PC-3 (cell line): ENCODE measurements at regions of chr2 and their contacts with region 1.

Region 1: GRCh38 chr2:62705007-62705829 is at the start of gene EHBP1:
- DNase-seq: peak; percentile 99
- ATAC-seq: peak; percentile 91
- H3K4me3 ChIP-seq: peak within 1 kb of the TSS; percentile 76
- H3K27ac ChIP-seq: peak within 1 kb of the TSS; percentile 35
- H3K4me1 ChIP-seq: peaks cover 42% of the 10 kb centered on the region
- H3K27me3 ChIP-seq: no peaks in the 10 kb centered on the region
- CTCF ChIP-seq: no peak
- total RNA-seq, gene EHBP1: 25.7 and 35.1 TPM in 2 replicates

Region 2: GRCh38 chr2:62334440-62335058 is 370.7 kb before region 1 on chr2:
- CTCF ChIA-PET with region 1: no interaction called
- POLR2A ChIA-PET with region 1: no interaction called
- intact Hi-C with region 1: no loop called
- DNase-seq: no peak
- ATAC-seq: no peak
- H3K4me3 ChIP-seq: no peak overlapping the region
- H3K27ac ChIP-seq: no peak overlapping the region
- H3K4me1 ChIP-seq: no peaks in the 10 kb centered on the region
- H3K27me3 ChIP-seq: no peaks in the 10 kb centered on the region
- CTCF ChIP-seq: no peak

Region 3: DNA sequence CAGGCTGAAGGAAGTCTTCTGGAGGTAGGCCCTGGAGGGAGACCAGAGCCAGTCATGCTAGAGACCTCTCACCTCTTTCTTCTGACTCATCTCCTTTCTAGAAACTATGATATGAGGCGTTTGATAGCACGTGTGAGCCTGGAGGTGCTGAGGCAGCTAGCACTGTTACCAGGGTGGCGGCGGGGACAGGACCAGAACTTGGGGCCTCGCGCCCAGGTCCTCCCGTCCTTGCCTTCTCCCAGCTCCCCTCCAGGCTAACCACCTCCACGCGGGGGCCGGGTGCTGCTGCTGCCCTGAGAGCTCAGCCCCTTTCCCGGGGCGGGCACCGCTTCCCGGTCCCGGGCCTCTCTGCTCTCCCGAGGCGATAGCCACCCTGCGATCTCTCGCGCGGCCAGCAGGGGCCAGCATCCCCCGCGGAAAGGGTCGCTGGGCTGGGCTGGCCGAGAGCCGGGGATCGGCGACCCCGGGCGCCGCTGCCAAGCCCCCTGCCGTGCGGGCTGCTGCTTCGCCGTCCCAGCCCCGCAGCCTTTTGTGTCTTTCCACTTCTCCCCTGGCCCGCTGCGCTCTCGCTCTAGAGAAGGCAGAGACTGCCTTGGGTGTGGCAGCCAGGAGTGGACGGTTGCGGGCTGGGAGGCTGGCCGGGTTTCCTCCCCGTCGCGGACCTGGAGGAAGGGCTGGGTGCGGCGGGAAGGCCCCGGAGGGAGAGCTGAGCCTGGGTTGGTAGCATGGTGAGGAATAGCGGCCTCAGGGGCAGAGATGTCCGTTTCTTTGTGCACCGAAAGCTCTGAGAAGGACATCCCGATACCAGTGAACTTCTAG is 248.3 kb before region 1 on chr2:
- CTCF ChIA-PET with region 1: interaction called, 3 read pairs
- POLR2A ChIA-PET with region 1: no interaction called
- intact Hi-C with region 1: loop called (anchors 1 kb)
- DNase-seq: peak; percentile 85
- ATAC-seq: peak; percentile 84
- H3K4me3 ChIP-seq: peak overlapping the region; percentile 80
- H3K27ac ChIP-seq: peak overlapping the region; percentile 67
- H3K4me1 ChIP-seq: peaks cover 24% of the 10 kb centered on the region
- H3K27me3 ChIP-seq: no peaks in the 10 kb centered on the region
- CTCF ChIP-seq: peak; percentile 92

Region 4: DNA sequence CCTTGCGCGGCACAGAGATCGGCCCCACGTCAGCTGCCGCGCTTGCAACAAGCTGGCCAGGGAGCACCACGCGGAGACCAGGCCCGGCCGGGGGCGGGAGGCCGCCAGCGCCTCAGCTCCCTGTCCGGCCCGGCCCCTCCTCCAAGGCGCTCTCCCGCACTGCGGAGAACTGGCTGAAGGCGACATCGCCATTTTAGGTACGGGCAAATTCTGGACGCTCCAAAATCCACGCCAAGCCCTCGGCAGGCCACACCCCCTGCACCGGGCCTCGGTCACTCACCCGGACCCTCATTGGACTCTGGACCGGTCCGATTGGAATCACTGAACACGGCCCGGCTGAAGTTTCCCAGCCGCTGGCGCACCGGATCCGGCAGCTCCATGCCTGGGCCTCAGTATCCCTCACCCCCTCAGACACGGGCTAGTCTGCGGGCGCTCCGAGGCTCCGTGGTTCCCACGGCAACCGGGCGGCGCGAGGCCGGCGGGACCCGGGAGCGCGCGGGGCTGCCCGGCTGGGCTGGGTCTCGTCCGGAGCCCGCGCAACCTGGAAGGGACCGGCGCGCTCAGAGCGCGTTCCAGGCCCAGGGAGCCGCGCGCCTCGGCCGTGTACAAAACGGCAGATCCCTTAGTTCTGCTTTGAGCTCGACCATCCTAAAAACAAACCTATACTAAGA is 199.3 kb before region 1 on chr2 and contains the start of gene TMEM17:
- CTCF ChIA-PET with region 1: no interaction called
- POLR2A ChIA-PET with region 1: no interaction called
- intact Hi-C with region 1: loop called (anchors 1 kb)
- DNase-seq: peak; percentile 94
- ATAC-seq: peak; percentile 90
- H3K4me3 ChIP-seq: peak within 1 kb of the TSS; percentile 77
- H3K27ac ChIP-seq: peak within 1 kb of the TSS; percentile 72
- H3K4me1 ChIP-seq: peaks cover 7% of the 10 kb centered on the region; the same call in 1 of the 2 replicates
- H3K27me3 ChIP-seq: no peaks in the 10 kb centered on the region
- CTCF ChIP-seq: no peak
- total RNA-seq, gene TMEM17: 1.6 and 2.9 TPM in 2 replicates

Region 5: GRCh38 chr2:62604336-62604735 is 100.9 kb before region 1 on chr2:
- CTCF ChIA-PET with region 1: no interaction called
- POLR2A ChIA-PET with region 1: no interaction called
- intact Hi-C with region 1: loop called (anchors 2 kb)
- DNase-seq: peak; percentile 82
- ATAC-seq: peak; percentile 91
- H3K4me3 ChIP-seq: 0 out of 2 replicates have a peak overlapping the region, but pooled peaks have one; percentile 17
- H3K27ac ChIP-seq: peak overlapping the region; percentile 42
- H3K4me1 ChIP-seq: peaks cover 12% of the 10 kb centered on the region
- H3K27me3 ChIP-seq: no peaks in the 10 kb centered on the region
- CTCF ChIP-seq: no peak

Region 6: DNA sequence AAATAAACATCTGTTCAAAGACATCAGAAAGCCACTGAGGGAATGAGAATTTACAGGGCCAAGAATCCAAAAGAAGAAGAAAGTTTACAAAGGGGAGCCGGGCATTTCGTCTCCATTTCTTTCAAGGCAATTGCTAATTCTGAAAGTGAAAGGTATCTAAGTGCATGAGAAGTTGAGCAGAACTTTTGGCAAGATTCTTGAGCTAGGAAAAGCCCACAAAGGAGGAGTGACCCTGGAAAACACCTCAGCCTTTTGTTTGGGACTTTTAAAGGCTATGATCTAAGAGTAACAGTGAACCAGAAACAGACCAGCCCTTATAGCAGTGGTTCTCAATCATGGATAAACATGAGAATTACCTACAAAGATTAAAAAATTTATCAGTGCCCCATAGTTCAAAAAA is 970.9 kb after region 1 on chr2:
- CTCF ChIA-PET with region 1: no interaction called
- POLR2A ChIA-PET with region 1: no interaction called
- intact Hi-C with region 1: no loop called
- DNase-seq: no peak
- ATAC-seq: no peak
- H3K4me3 ChIP-seq: no peak overlapping the region
- H3K27ac ChIP-seq: no peak overlapping the region
- H3K4me1 ChIP-seq: no peaks in the 10 kb centered on the region
- H3K27me3 ChIP-seq: no peaks in the 10 kb centered on the region
- CTCF ChIP-seq: no peak